Activated T-helper 2 cell treated with anti-CD3 and anti-CD28 coated beads, Interferon-gamma antibody, Interleukin-2, Interleukin-4, amounts not matched to agents 10 μg/mL and 5 μg/mL and 100 μg/mL, durations not matched to agents 14 hours and 24 hours and 36 hours (primary cell): ENCODE measurements at regions of chr14 and their contacts with region 1.

Region 1: DNA sequence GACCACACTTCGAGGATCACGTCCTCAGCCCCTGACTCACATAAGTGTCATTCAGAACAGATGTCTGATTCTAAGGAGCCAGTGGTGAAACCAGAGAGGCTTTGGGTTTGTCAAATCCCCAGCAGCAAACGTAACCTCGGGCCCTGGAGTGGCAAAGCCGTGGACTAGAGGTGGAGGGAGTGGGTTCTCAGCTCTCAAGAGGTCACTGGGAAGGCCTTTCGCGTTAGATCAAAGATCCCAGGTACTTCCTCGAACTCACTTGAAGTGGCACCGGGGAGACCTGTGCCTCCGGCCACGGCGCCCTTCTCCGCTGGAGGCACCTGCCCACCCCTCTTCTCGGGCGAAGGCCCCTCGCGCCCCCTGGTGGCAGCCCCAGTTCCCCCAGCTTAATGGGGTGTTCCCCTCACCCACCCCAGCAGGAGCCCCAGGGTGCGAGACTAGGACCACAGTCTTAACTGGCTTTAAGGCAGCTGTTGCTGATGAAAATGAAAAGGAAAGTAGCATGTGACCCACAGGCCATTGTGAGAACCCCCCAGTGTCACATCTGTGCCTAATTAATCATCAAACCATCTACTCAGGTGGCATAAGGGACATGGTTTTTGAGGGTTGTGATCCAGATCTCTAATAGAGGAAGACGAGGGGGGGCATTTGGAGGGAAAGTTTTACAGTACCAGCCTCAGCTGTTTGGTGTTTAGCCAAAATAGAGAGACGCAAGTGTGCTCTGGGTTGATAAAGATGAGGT is 672 bp upstream of the ESR2 start:
- DNase-seq: peak; percentile 78
- H3K4me3 Mint-ChIP-seq: peak overlapping the region; percentile 63
- H3K27ac Mint-ChIP-seq: no peak overlapping the region
- H3K4me1 Mint-ChIP-seq: peaks cover 31% of the 10 kb centered on the region
- H3K27me3 Mint-ChIP-seq: peaks cover 44% of the 10 kb centered on the region

Region 2: GRCh38 chr14:63800651-63801375 is 494.0 kb before region 1 on chr14:
- intact Hi-C with region 1: loop called (anchors 2 kb)
- DNase-seq: no peak
- H3K4me3 Mint-ChIP-seq: no peak overlapping the region
- H3K27ac Mint-ChIP-seq: no peak overlapping the region
- H3K4me1 Mint-ChIP-seq: peaks cover 4% of the 10 kb centered on the region
- H3K27me3 Mint-ChIP-seq: peaks cover 8% of the 10 kb centered on the region

Region 3: GRCh38 chr14:64005822-64006221 is 289.0 kb before region 1 on chr14:
- intact Hi-C with region 1: loop called (anchors 2 kb)
- DNase-seq: no peak
- H3K4me3 Mint-ChIP-seq: no peak overlapping the region
- H3K27ac Mint-ChIP-seq: no peak overlapping the region
- H3K4me1 Mint-ChIP-seq: no peaks in the 10 kb centered on the region
- H3K27me3 Mint-ChIP-seq: no peaks in the 10 kb centered on the region

Region 4: DNA sequence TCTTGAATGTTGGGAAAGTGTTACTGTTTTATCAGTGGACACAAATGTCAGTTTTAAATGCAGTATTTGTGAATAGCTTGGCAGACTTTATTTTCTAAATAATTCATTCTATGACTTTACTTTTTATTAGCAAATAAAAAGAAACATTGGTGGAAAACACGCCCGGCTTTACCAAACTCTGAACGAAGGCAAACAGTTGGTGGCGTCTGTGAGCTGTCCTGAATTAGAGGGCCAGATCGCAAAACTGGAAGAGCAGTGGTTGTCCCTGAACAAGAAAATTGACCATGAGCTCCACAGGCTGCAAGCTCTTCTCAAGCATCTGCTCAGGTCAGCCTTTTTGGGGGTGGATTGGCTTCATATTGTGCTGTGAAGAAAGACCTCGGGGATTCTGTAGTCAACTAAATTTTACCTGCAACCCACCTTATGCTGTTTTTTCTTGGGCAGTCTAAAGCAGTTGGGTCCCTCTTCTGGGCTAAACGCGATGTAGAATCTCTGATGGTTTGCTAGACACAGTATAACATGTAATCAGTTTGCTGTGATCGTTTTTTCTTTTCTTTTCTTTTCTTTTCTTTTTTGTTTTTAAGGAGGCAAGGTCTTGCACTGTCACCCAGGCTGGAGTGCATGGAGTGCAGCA is 157.1 kb before region 1 on chr14:
- intact Hi-C with region 1: loop called (anchors 5 kb)
- DNase-seq: no peak
- H3K4me3 Mint-ChIP-seq: no peak overlapping the region
- H3K27ac Mint-ChIP-seq: no peak overlapping the region
- H3K4me1 Mint-ChIP-seq: no peaks in the 10 kb centered on the region
- H3K27me3 Mint-ChIP-seq: no peaks in the 10 kb centered on the region

Region 5: GRCh38 chr14:64218344-64219240 is 76.3 kb before region 1 on chr14:
- intact Hi-C with region 1: no loop called
- DNase-seq: no peak
- H3K4me3 Mint-ChIP-seq: no peak overlapping the region
- H3K27ac Mint-ChIP-seq: no peak overlapping the region
- H3K4me1 Mint-ChIP-seq: peaks cover 3% of the 10 kb centered on the region
- H3K27me3 Mint-ChIP-seq: no peaks in the 10 kb centered on the region

Region 6: DNA sequence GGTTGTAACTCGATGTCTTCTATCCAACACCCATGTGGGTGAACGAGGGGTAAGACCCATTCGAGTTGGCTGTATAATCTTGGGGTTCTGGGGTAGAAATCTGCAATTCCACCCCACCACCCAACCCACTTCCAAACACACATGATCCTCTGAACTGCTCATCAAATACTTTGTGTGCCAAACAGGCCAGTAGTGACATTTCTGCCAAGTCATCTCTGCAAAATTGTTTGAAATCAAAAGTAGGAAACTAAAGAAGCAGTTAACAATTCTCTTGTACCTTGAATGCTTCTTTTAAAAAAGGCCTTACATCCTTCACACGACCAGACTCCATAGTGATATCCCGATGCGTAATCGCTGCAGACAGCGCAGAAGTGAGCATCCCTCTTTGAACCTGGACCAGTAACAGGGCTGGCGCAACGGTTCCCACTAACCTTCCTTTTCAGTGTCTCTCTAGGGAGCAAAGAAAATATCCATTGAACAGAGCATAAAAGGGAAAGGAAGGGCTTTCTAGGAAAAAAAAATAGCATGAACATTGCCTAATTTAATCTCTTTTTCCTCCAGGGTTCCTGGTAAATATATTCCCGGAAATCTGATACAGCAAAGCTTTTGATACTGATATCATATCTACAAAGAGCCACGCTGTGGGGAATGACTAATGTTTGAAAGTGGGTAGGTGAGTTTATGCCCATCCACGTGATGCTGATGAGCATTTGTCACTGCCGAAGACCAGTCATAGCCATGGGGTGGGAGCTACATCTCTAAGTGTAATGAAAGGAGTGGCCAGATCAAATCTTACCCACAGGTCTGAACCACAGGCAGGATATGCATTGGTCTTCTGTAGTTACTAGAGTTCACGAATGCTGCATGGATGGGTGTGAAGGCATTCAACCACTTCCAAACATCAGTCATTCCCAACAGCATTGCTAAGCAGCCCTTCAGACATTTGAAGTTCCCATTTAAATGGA is 14.9 kb before region 1 on chr14:
- intact Hi-C with region 1: loop called (anchors 2 kb)
- DNase-seq: peak; percentile 36
- H3K4me3 Mint-ChIP-seq: no peak overlapping the region
- H3K27ac Mint-ChIP-seq: peak overlapping the region; percentile 9
- H3K4me1 Mint-ChIP-seq: peaks cover 31% of the 10 kb centered on the region
- H3K27me3 Mint-ChIP-seq: peaks cover 2% of the 10 kb centered on the region

Region 7: DNA sequence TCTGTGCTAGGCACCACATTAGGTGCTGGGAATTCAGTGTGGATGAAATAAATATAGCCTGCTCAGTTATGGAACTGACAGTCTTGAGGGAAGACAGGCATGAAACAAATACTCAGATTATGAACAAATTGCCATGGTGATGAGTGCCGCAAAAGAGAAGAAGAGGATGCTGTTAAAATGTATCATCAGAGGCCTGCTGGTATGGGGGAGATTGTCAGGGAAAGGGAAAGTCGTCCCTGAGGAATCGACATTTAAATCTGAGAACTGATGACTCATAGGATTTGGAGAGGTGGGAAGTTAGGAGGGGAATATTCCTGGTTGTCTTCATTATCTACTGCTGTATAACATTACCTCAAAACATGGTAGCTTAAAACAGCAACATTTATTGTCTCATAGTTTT is 297.0 kb after region 1 on chr14:
- intact Hi-C with region 1: no loop called
- DNase-seq: no peak
- H3K4me3 Mint-ChIP-seq: no peak overlapping the region
- H3K27ac Mint-ChIP-seq: no peak overlapping the region
- H3K4me1 Mint-ChIP-seq: no peaks in the 10 kb centered on the region
- H3K27me3 Mint-ChIP-seq: peaks cover 16% of the 10 kb centered on the region